ENCODE measurements at regions of chr3 and their contacts with region 1.

Region 1: GRCh38 chr3:123652346-123652984 is 67.6 kb upstream of the HACD2 start:
- DNase-seq: peak; percentile 64 to 71 (median 66)
- ATAC-seq: peak; percentile 99
- H3K4me3 ChIP-seq: no peak overlapping the region
- H3K27ac ChIP-seq: no peak overlapping the region
- H3K4me1 ChIP-seq: no peaks in the 10 kb centered on the region
- H3K27me3 ChIP-seq: peaks cover 0 to 22% of the 10 kb centered on the region in 2 experiments; a peak in 2 of 5 replicates
- CTCF ChIP-seq: peak; percentile 82 to 85 (median 85)
- EP300 ChIP-seq: no peak
- POLR2A ChIP-seq: no peak
- RAD21 ChIP-seq: peak; percentile 78 to 87

Region 2: GRCh38 chr3:123700791-123701722 is 48.6 kb after region 1 on chr3:
- CTCF ChIA-PET with region 1: no interaction called
- POLR2A ChIA-PET with region 1: no interaction called
- in situ Hi-C with region 1: no loop called
- intact Hi-C with region 1: loop called (anchors 5 kb)
- DNase-seq: no peak
- ATAC-seq: no peak
- H3K4me3 ChIP-seq: no peak overlapping the region
- H3K27ac ChIP-seq: no peak overlapping the region
- H3K4me1 ChIP-seq: no peaks in the 10 kb centered on the region
- H3K27me3 ChIP-seq: peaks cover 0 to 20% of the 10 kb centered on the region in 2 experiments; a peak in 2 of 5 replicates
- CTCF ChIP-seq: no peak
- EP300 ChIP-seq: no peak
- POLR2A ChIP-seq: no peak
- RAD21 ChIP-seq: no peak

Region 3: GRCh38 chr3:123723522-123724168 is 71.2 kb after region 1 on chr3:
- CTCF ChIA-PET with region 1: interaction called, 5 read pairs
- POLR2A ChIA-PET with region 1: no interaction called
- in situ Hi-C with region 1: loop called (anchors 5 kb)
- intact Hi-C with region 1: loop called (anchors 2 kb)
- DNase-seq: peak; percentile 51 to 77 (median 56)
- ATAC-seq: peak; percentile 92
- H3K4me3 ChIP-seq: no peak overlapping the region
- H3K27ac ChIP-seq: no peak overlapping the region
- H3K4me1 ChIP-seq: no peaks in the 10 kb centered on the region
- H3K27me3 ChIP-seq: no peaks in the 10 kb centered on the region
- CTCF ChIP-seq: peak; percentile 72 to 80 (median 75)
- EP300 ChIP-seq: no peak
- POLR2A ChIP-seq: no peak
- RAD21 ChIP-seq: peak; percentile 22 to 57; a peak in 2 of 4 replicates

Region 4: DNA sequence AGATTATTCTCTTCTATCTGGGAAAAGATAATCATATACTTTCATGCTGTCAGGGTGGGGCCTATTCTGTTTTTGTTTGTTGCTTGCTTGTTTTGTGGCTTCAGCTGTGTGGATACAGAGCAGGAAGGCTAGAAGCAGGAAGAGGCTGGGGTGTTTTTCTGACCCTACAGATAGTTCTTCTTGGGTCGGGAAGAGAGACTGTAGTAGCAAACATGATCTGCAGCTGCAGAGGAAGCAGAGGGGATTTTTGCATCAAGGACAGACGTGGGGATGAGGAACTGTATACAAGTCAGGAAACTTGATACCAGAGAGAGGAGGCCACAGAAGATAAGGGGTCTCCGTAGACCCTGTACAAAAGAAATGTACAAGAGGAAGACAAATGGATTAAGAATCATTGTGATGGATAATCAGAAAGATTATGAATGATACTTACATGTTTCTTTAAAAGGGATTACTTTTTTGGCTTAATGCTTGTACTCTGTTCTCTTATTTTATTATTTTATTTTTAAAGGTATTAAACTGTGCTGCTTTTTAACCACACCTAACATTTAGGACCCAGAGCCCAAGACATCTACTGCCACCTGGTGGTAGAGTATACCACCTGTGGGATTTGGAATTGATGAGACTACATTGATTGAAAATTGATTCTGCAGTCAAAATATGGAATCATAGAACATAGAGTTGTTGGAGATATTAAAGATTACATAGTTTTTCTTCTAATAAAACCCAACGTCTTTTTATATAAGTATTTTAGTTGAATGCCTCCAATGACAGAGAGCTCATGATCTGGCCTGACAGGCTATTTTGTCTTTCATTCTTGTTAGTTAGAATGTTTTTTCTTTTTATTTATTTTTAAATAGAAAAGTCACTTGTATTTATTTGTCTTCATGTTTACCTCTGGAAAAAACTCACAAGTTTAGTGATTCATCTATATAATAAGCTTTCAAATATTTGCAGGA is 426.8 kb after region 1 on chr3:
- CTCF ChIA-PET with region 1: no interaction called
- POLR2A ChIA-PET with region 1: no interaction called
- in situ Hi-C with region 1: no loop called
- intact Hi-C with region 1: loop called (anchors 5 kb)
- DNase-seq: peak; percentile 17 to 40 (median 33)
- ATAC-seq: peak; percentile 55; the same call in 1 of the 3 replicates
- H3K4me3 ChIP-seq: no peak overlapping the region
- H3K27ac ChIP-seq: no peak overlapping the region
- H3K4me1 ChIP-seq: no peaks in the 10 kb centered on the region
- H3K27me3 ChIP-seq: peaks cover 0 to 12% of the 10 kb centered on the region in 2 experiments; a peak in 2 of 5 replicates
- CTCF ChIP-seq: peak; percentile 40 to 69 (median 47); a peak in 3 of 6 replicates
- EP300 ChIP-seq: no peak
- POLR2A ChIP-seq: no peak
- RAD21 ChIP-seq: peak; percentile 61 to 75